ENCODE measurements at regions of chr14 and their contacts with region 1.

Region 1: DNA sequence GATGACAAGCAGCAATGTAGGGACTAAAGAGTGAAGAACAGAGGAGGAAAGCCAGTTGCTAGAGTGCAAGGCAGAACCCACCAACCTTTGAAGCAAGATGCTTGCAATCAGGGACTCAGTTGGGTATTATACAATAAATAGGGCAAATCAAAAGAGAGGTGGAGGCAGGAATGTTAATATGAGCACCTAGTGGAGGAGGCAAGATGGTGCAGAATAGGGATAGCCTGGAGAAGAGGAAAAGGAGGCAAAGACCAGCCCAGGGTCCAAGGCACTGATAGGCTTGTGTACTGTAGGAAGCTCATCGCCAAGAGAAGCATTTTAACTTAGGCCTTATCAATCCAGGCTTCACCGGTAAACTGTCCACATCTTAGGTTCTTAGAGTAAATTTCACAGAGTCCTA is 137.2 kb downstream of the ARMH4 start:
- DNase-seq: no peak
- H3K4me3 ChIP-seq: no peak overlapping the region
- H3K27ac ChIP-seq: no peak overlapping the region
- H3K27me3 ChIP-seq: no peaks in the 10 kb centered on the region
- CTCF ChIP-seq: no peak

Region 2: DNA sequence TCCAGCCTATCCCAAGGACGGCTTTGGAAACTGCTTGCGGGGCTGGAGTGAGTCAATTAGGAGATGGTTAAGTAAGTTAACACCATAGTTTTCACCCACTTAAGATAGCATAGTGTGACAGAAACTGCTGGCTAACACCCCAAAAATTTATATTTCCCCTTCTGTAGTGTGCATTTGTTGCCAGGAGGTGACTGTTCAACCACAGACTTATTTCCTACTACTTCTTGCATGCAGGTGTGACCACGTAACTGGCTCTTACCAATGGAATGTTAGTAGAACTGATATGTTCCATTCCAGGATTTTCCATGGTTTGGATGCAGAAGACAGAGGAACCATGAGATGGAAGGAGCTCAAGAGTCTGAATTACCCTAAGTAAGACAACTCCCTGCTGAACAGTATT is 96.0 kb before region 1 on chr14:
- CTCF ChIA-PET with region 1: interaction called, 11 read pairs
- POLR2A ChIA-PET with region 1: no interaction called
- DNase-seq: no peak
- H3K4me3 ChIP-seq: no peak overlapping the region
- H3K27ac ChIP-seq: no peak overlapping the region
- H3K27me3 ChIP-seq: no peaks in the 10 kb centered on the region
- CTCF ChIP-seq: no peak

Region 3: GRCh38 chr14:58082491-58083098 is 67.8 kb after region 1 on chr14:
- CTCF ChIA-PET with region 1: no interaction called
- POLR2A ChIA-PET with region 1: no interaction called
- DNase-seq: peak; percentile 47
- H3K4me3 ChIP-seq: no peak overlapping the region
- H3K27ac ChIP-seq: peak overlapping the region; percentile 76
- H3K27me3 ChIP-seq: no peaks in the 10 kb centered on the region
- CTCF ChIP-seq: no peak

Measured in AG04450 (cell line).